ENCODE measurements at regions of chr10 and their contacts with region 1.

Region 1: DNA sequence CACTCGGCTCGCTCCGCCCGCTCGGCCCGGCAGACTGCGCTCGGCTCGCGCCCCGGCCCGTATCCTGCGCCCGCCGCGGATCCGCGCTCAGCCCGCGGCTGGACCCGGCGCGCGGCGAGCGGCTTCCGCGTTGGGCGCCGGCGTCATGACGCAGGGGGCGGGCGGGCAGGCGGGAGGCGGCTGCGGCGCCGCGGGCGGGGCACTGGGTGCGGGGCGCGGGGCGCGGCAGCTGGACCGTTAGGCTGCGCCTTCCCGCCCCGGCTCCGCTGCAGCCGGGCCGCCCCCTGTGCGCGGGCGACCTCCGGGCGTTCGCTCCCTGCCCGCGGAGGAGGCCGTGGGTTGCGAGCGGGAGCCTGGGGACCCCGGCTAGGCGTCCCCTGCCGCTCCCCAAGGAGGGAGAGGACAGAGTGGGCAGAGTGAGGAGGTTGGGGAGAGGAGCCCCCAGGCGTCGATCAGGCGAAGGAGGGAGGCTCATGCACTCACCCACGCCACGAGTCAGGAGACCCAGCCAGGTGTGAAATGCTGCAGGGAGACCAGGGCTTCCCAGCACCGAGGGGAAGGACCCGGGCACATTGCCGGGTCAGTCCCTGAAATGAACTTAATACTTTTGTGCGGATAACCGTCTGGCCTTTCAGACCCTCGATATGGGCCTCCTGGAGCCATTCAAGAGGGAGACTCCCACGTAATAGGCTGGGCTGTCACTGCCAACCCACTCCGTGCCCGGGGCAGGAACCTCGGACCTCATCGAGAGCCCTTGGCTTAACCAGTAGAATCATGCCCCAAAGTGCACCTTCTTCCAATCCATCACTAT is at the start of gene PIP4K2A:
- DNase-seq: peak; percentile 83
- ATAC-seq: peak; percentile 85
- H3K4me3 Mint-ChIP-seq: peak within 1 kb of the TSS; percentile 90
- H3K27ac Mint-ChIP-seq: peak within 1 kb of the TSS; percentile 82
- H3K4me1 Mint-ChIP-seq: peaks cover 37% of the 10 kb centered on the region
- H3K27me3 Mint-ChIP-seq: no peaks in the 10 kb centered on the region
- CTCF ChIP-seq: no peak
- total RNA-seq, gene PIP4K2A: 94.6 and 102 TPM in 2 replicates

Region 2: GRCh38 chr10:22340362-22341189 is 374.1 kb before region 1 on chr10:
- CTCF ChIA-PET with region 1: no interaction called
- POLR2A ChIA-PET with region 1: no interaction called
- intact Hi-C with region 1: loop called (anchors 5 kb)
- DNase-seq: peak; percentile 77
- ATAC-seq: peak; percentile 61
- H3K4me3 Mint-ChIP-seq: peak overlapping the region; percentile 90
- H3K27ac Mint-ChIP-seq: peak overlapping the region; percentile 88
- H3K4me1 Mint-ChIP-seq: peaks cover 34% of the 10 kb centered on the region
- H3K27me3 Mint-ChIP-seq: peaks cover 45% of the 10 kb centered on the region
- CTCF ChIP-seq: no peak

Region 3: DNA sequence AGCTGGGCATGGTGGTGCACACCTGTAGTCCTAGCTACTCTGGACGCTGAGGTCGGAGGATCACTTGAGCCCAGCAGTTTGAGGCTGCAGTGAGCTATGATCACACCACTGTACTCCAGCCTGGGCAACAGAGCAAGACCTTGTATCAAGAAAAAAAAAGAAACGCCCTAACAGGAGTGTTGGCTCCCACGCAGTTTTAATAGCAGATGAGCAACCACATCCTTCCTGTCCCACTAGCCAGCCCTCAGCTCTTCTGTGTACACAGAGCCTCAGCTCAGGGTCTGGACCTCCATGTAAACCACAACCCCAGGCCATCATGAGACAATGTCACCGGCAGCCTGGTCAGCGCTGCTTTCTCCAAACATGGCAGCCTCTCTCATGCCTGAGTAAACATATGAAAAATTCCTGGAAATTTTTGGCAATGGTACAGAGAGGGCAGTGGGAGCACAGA is 108.5 kb before region 1 on chr10:
- CTCF ChIA-PET with region 1: interaction called, 4 read pairs
- POLR2A ChIA-PET with region 1: interaction called, 38 read pairs
- intact Hi-C with region 1: loop called (anchors 1 kb)
- DNase-seq: no peak
- ATAC-seq: peak; percentile 75
- H3K4me3 Mint-ChIP-seq: peak overlapping the region; percentile 68
- H3K27ac Mint-ChIP-seq: peak overlapping the region; percentile 94
- H3K4me1 Mint-ChIP-seq: peaks cover 93% of the 10 kb centered on the region
- H3K27me3 Mint-ChIP-seq: no peaks in the 10 kb centered on the region
- CTCF ChIP-seq: no peak

Region 4: DNA sequence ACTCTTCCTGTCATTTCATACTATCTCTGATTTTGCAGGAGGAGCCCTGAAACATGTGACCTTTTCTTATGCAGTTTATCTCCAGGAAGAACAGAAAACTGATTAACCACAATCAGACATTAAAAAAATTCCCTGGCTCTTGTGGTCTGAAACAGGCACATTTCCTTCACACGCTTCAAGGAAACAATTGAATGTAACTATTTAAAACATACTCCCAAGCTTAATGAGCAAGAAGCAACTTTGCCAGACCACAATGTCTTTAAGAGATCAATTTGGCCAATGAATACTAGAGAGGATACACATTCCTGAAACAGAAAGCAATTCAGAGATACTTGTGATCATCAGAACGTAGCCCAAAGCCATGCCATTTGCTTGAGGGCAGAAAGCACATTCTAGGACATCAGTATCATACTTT is 66.1 kb before region 1 on chr10:
- CTCF ChIA-PET with region 1: no interaction called
- POLR2A ChIA-PET with region 1: interaction called, 3 read pairs
- intact Hi-C with region 1: loop called (anchors 2 kb)
- DNase-seq: no peak
- ATAC-seq: no peak
- H3K4me3 Mint-ChIP-seq: peak overlapping the region; percentile 24
- H3K27ac Mint-ChIP-seq: peak overlapping the region; percentile 18
- H3K4me1 Mint-ChIP-seq: peaks cover 90% of the 10 kb centered on the region
- H3K27me3 Mint-ChIP-seq: no peaks in the 10 kb centered on the region
- CTCF ChIP-seq: no peak

Region 5: GRCh38 chr10:22693371-22693784 is 21.3 kb before region 1 on chr10:
- CTCF ChIA-PET with region 1: interaction called, 3 read pairs
- POLR2A ChIA-PET with region 1: interaction called, 3 read pairs
- intact Hi-C with region 1: loop called (anchors 1 kb)
- DNase-seq: no peak
- ATAC-seq: peak; percentile 52
- H3K4me3 Mint-ChIP-seq: no peak overlapping the region
- H3K27ac Mint-ChIP-seq: peak overlapping the region; percentile 69
- H3K4me1 Mint-ChIP-seq: peaks cover 79% of the 10 kb centered on the region
- H3K27me3 Mint-ChIP-seq: no peaks in the 10 kb centered on the region
- CTCF ChIP-seq: no peak

Region 6: GRCh38 chr10:23095404-23095965 is 380.8 kb after region 1 on chr10 and contains the start of gene MSRB2:
- CTCF ChIA-PET with region 1: no interaction called
- POLR2A ChIA-PET with region 1: no interaction called
- intact Hi-C with region 1: loop called (anchors 10 kb)
- DNase-seq: peak; percentile 47
- ATAC-seq: peak; percentile 81
- H3K4me3 Mint-ChIP-seq: peak within 1 kb of the TSS; percentile 89
- H3K27ac Mint-ChIP-seq: peak within 1 kb of the TSS; percentile 77
- H3K4me1 Mint-ChIP-seq: peaks cover 17% of the 10 kb centered on the region
- H3K27me3 Mint-ChIP-seq: no peaks in the 10 kb centered on the region
- CTCF ChIP-seq: no peak
- total RNA-seq, gene MSRB2: 4.1 and 4.6 TPM in 2 replicates

Measured in activated B cell treated with CpG ODN at 0.5 μM for 24 hours (primary cell).